CD4-positive, alpha-beta memory T cell (primary cell): ENCODE measurements at regions of chrX and their contacts with region 1.

Region 1: DNA sequence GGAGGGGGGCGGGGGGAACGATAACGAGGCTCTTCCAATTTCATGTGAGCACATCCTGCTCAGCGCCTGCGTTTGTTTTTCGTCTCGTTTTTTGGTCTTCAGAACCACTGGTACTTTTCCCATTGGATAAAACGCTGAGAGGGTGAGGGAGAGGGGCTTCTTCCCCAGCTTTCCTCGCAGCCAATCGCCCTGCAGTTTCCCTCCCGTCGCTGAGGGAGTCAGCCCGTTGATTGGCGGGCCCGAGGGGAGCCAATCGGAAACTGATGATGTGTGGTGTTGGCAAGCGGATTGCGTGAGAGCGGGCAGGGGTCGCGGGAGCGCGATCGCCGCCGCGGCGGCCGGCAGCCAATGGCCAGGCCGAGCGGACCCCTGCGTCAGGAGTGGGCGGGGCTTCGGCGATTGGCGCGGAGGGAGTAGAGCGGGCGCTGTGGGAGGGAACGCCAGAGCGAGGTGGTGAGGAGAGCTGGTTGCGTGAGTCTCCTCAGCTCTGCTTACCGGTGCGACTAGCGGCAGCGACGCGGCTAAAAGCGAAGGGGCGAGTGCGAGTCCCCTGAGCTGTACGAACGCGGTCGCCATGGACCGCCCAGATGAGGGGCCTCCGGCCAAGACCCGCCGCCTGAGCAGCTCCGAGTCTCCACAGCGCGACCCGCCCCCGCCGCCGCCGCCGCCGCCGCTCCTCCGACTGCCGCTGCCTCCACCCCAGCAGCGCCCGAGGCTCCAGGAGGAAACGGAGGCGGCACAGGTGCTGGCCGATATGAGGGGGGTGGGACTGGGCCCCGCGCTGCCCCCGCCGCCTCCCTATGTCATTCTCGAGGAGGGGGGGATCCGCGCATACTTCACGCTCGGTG is at the start of gene TSPYL2:
- DNase-seq: peak; percentile 91 to 98 (median 94)
- H3K4me3 ChIP-seq: peak within 1 kb of the TSS; percentile 47 to 54
- H3K4me3 Mint-ChIP-seq: peak within 1 kb of the TSS; percentile 84 to 92 (median 90)
- H3K27ac ChIP-seq: peak within 1 kb of the TSS; percentile 71
- H3K27ac Mint-ChIP-seq: peak within 1 kb of the TSS; percentile 97 to 99 (median 98)
- H3K4me1 ChIP-seq: peaks cover 26% of the 10 kb centered on the region
- H3K4me1 Mint-ChIP-seq: peaks cover 25 to 56% (median 28%) of the 10 kb centered on the region in 4 donors
- H3K27me3 ChIP-seq: no peaks in the 10 kb centered on the region
- H3K27me3 Mint-ChIP-seq: no peaks in the 10 kb centered on the region
- total RNA-seq, gene TSPYL2: 159 to 163 TPM

Region 2: DNA sequence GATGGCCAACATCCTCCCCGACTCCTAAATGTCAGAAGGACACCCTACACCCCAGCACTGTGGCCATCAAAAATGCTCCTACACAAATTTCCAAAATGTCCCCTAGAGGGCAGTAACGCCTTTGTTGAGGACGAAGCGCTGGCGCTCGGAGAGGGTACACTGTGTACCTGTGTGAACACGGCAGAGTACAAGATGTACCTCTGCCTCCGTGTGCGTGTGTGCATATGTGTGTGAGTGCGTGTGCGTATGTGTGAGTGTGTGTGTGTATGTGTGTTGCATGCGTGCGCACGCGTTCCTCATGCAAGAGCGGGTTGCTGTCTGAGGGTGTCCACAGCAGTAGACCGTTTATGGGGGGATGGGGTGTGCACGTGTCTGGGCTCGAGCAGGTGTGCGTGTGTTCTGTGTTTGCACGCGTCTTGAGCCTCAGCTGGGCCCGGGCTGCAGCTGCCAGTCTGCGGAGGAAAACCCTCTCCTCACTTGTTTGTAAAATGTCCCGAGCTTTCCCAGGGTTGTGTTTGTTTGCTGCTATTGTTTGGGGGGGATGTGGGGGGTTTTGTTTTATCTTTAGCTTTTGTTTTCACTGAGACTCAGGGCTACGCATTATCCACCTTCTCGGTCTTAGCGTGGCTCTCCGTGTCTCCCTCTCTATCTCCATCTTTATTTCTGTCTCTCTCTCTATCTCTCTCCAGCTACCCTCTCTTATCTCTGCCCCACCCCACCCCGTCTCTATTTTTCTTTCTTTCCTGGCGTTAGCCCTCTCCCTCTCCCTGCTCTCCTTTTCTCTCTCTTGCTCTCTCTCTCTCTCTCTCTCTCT is 10.3 kb before region 1 on chrX:
- CTCF ChIA-PET with region 1: interaction called, 14 read pairs
- POLR2A ChIA-PET with region 1: interaction called, 62 read pairs
- intact Hi-C with region 1: no loop called
- DNase-seq: peak; percentile 79 to 82 (median 81)
- H3K4me3 ChIP-seq: peak overlapping the region in 1 of 2 donors; percentile 52
- H3K4me3 Mint-ChIP-seq: peak overlapping the region; percentile 86 to 92 (median 90)
- H3K27ac ChIP-seq: no peak overlapping the region
- H3K27ac Mint-ChIP-seq: peak overlapping the region; percentile 68 to 95 (median 92)
- H3K4me1 ChIP-seq: peaks cover 9% of the 10 kb centered on the region
- H3K4me1 Mint-ChIP-seq: peaks cover 11 to 23% (median 14%) of the 10 kb centered on the region in 4 donors
- H3K27me3 ChIP-seq: no peaks in the 10 kb centered on the region
- H3K27me3 Mint-ChIP-seq: peaks cover 3% of the 10 kb centered on the region in 2 donors

Region 3: DNA sequence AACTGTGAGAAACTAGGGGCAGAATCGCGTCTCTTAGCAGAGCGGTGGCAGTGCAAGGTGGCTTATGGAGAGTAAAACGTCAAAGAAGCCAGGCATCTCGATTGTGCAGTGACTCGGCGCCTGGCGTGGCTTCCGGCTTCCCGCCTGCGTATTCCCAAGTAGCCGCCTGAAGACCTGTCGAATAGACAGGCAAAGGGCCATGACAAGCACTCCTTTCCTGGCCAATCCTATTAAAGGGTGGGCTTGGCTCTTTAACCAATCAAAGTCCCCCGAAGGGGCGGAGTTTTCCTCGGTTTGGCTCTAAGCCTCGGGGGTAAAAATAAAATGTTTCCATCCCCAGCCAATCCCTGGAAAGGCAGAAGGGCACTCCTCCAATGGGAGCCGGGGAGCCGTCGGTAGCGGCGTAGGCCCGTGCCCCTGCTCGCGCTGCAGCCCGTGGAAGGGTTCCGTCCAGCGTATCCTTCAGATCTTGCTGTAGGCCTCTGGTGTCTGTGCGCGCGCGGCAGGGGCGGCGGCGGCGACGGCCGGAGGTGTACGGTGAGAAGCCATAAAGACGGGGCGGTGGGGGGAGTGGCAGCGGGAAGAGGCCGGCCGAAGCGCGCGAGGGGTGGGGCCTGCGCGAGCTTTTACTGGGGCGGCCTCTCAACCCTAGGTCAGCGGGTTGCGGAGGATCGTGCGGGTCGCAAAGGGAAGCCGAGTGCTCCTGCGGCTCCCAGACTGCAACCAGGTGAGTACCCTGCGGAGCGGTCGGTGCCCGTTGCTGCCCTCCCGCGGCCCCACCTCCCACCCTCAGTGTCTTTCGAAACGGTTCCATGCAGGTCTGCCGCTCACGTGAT is 11.8 kb after region 1 on chrX and contains the start of gene KANTR:
- CTCF ChIA-PET with region 1: interaction called, 4 read pairs
- POLR2A ChIA-PET with region 1: interaction called, 34 read pairs
- intact Hi-C with region 1: loop called (anchors 1 kb)
- DNase-seq: peak; percentile 83 to 92 (median 84)
- H3K4me3 ChIP-seq: peak within 1 kb of the TSS; percentile 29 to 58
- H3K4me3 Mint-ChIP-seq: peak within 1 kb of the TSS; percentile 84 to 93 (median 89)
- H3K27ac ChIP-seq: peak within 1 kb of the TSS; percentile 55
- H3K27ac Mint-ChIP-seq: peak within 1 kb of the TSS; percentile 87 to 92 (median 91)
- H3K4me1 ChIP-seq: peaks cover 9% of the 10 kb centered on the region
- H3K4me1 Mint-ChIP-seq: peaks cover 7 to 35% (median 19%) of the 10 kb centered on the region in 4 donors
- H3K27me3 ChIP-seq: no peaks in the 10 kb centered on the region
- H3K27me3 Mint-ChIP-seq: no peaks in the 10 kb centered on the region
- total RNA-seq, gene KANTR: 19.9 to 23.4 TPM

Region 4: GRCh38 chrX:53224860-53225797 is 143.0 kb after region 1 on chrX and contains the start of gene KDM5C:
- CTCF ChIA-PET with region 1: no interaction called
- POLR2A ChIA-PET with region 1: interaction called, 10 read pairs
- intact Hi-C with region 1: loop called (anchors 5 kb)
- DNase-seq: peak; percentile 90 to 96 (median 96)
- H3K4me3 ChIP-seq: peak within 1 kb of the TSS; percentile 65 to 88
- H3K4me3 Mint-ChIP-seq: peak within 1 kb of the TSS; percentile 97 to 100 (median 99)
- H3K27ac ChIP-seq: peak within 1 kb of the TSS; percentile 97
- H3K27ac Mint-ChIP-seq: peak within 1 kb of the TSS; percentile 98 to 100 (median 99)
- H3K4me1 ChIP-seq: peaks cover 35% of the 10 kb centered on the region
- H3K4me1 Mint-ChIP-seq: peaks cover 24 to 52% (median 39%) of the 10 kb centered on the region in 4 donors
- H3K27me3 ChIP-seq: no peaks in the 10 kb centered on the region
- H3K27me3 Mint-ChIP-seq: peaks cover 0 to 2% of the 10 kb centered on the region in 2 donors
- total RNA-seq, gene KDM5C: 120 to 127 TPM

Region 5: DNA sequence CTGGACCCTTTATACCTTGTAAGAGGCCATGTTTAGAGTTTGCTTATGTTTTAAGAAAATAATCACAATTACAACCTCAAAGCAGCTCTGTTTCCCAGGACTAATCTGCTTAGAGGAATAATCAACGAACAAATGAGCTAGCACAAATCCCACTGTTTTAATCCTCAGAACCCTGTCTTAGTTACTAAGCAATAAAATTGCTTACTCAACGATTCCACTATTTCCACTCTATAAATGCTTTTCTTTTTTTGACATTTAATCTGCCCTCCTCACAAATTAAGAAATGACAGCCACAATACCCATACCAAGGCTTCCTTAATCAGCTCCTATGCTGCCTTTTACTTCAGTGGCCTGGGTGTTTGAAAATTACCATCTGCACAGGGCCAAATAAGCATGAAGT is 1052.1 kb after region 1 on chrX:
- CTCF ChIA-PET with region 1: no interaction called
- POLR2A ChIA-PET with region 1: no interaction called
- intact Hi-C with region 1: no loop called
- DNase-seq: no peak
- H3K4me3 ChIP-seq: no peak overlapping the region
- H3K4me3 Mint-ChIP-seq: no peak overlapping the region
- H3K27ac ChIP-seq: no peak overlapping the region
- H3K27ac Mint-ChIP-seq: no peak overlapping the region
- H3K4me1 ChIP-seq: no peaks in the 10 kb centered on the region
- H3K4me1 Mint-ChIP-seq: no peaks in the 10 kb centered on the region
- H3K27me3 ChIP-seq: no peaks in the 10 kb centered on the region
- H3K27me3 Mint-ChIP-seq: no peaks in the 10 kb centered on the region